Heart left ventricle (tissue), 16 donors: ENCODE measurements at regions of chr1 and their contacts with region 1.

Region 1: GRCh38 chr1:27979151-27979858 is 19.5 kb downstream of the XKR8 start:
- DNase-seq: no peak
- ATAC-seq: peak in 3 of 4 donors; percentile 61 to 79 (median 62)
- H3K4me3 ChIP-seq: no peak overlapping the region
- H3K27ac ChIP-seq: peak overlapping the region in 1 of 12 donors; percentile 53
- H3K4me1 ChIP-seq: peaks cover 0 to 14% (median 2%) of the 10 kb centered on the region in 12 donors
- H3K27me3 ChIP-seq: no peaks in the 10 kb centered on the region
- CTCF ChIP-seq: peak; percentile 26 to 68 (median 50)
- POLR2A ChIP-seq: no peak

Region 2: GRCh38 chr1:27616441-27616840 is 362.9 kb before region 1 on chr1:
- intact Hi-C with region 1: no loop called
- DNase-seq: peak in 1 of 5 donors; percentile 14
- ATAC-seq: no peak
- H3K4me3 ChIP-seq: no peak overlapping the region
- H3K27ac ChIP-seq: no peak overlapping the region
- H3K4me1 ChIP-seq: peaks cover 0 to 55% (median 2%) of the 10 kb centered on the region in 12 donors
- H3K27me3 ChIP-seq: no peaks in the 10 kb centered on the region
- CTCF ChIP-seq: peak in 1 of 12 donors; percentile 11
- POLR2A ChIP-seq: no peak

Region 3: DNA sequence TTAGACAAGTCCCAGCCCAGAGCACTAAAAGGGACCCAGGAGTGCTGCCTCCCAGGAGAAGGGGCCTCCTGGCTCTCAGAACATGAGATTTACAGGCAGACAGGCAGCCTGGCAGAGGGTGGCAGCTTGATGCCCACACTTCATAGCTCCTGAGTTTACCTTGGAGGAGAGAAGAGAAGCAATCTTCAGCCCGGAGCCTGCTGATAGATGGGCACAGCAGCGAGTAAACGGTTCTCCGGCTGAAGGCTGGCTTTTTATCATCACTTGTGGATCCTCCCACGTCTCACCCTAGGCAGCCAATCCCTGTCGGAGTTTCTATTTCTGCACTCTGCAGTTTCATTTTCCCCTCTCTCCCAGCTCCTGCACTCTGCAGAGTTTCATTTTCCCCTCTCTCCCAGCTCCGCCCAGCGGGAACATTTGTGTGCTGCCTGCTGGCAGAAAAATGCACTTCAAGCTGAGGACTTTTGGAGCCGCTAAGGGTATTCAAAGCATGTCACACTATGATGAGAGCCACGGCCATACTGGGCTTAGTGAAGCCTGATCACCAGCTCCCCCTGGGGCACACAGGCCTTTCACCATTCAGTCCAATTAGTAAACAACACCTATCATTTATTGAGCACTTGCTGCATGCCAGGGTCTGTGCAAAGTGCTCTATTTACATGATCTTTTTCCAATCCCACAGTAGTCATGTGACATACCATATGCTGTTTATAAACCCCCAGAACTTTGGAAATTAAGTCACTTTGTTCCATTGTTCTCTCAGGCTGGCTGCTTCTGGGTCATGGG is 307.1 kb before region 1 on chr1 and contains the start of gene IFI6:
- intact Hi-C with region 1: loop called in 1 of 10 experiments (anchors 10 kb)
- DNase-seq: peak; percentile 85 to 91 (median 89)
- ATAC-seq: peak; percentile 95 to 99 (median 98)
- H3K4me3 ChIP-seq: peak within 1 kb of the TSS; percentile 38 to 94 (median 61)
- H3K27ac ChIP-seq: peak within 1 kb of the TSS; percentile 43 to 92 (median 86)
- H3K4me1 ChIP-seq: peaks cover 0 to 55% (median 23%) of the 10 kb centered on the region in 12 donors
- H3K27me3 ChIP-seq: no peaks in the 10 kb centered on the region
- CTCF ChIP-seq: peak in 11 of 12 donors; percentile 5 to 62 (median 42)
- POLR2A ChIP-seq: peak in 1 of 2 donors; percentile 61
- total RNA-seq, gene IFI6: 18.3 to 140 (median 70.2) TPM

Region 4: GRCh38 chr1:27858072-27858958 is 121.0 kb before region 1 on chr1:
- intact Hi-C with region 1: loop called (anchors 1 to 10 kb)
- DNase-seq: peak; percentile 75 to 89 (median 81)
- ATAC-seq: peak; percentile 79 to 94 (median 91)
- H3K4me3 ChIP-seq: peak overlapping the region in 1 of 12 donors; percentile 29
- H3K27ac ChIP-seq: peak overlapping the region in 1 of 12 donors; percentile 75
- H3K4me1 ChIP-seq: peaks cover 0 to 35% (median 3%) of the 10 kb centered on the region in 12 donors
- H3K27me3 ChIP-seq: no peaks in the 10 kb centered on the region
- CTCF ChIP-seq: peak; percentile 77 to 96 (median 88)
- POLR2A ChIP-seq: no peak

Region 5: DNA sequence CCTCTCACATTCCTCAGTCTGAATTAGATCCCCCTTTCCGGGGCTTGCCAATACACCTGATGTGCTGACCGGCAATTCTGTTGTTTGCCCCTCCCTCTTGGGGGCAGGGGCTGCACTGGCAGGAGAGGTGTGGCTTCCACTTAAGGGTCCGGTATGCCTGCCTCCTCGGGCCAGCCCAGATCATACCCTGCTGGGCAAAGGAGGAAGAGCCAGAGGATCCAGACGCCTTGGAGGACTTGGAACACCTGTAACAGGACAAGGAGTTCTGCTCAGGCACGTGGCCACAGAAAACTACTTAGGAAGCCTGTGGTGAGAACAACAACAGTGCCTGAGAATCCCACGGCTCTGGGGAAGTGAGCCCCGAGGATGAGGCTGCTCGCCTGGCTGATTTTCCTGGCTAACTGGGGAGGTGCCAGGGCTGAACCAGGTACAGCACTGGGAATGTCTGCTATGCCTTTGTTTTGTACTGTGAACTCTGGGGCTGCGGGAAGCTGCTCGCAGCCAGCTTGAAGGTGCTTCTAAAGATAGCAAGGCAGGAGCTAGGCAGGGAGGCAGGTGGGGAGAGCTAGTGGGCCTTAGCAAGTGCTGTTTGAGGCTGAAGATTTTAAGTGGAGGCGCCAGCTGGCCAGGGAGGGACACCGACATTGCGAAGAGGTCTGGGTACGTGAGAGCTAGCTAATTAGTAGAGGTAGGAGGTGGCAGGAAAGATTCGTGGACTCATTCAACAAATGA is 44.3 kb before region 1 on chr1 and contains the start of gene SMPDL3B:
- intact Hi-C with region 1: loop called in 4 of 10 experiments (anchors 1 to 10 kb)
- DNase-seq: no peak
- ATAC-seq: peak in 2 of 4 donors; percentile 9 to 64
- H3K4me3 ChIP-seq: peak within 1 kb of the TSS in 2 of 12 donors; percentile 8 to 20
- H3K27ac ChIP-seq: no peak within 1 kb of the TSS
- H3K4me1 ChIP-seq: peaks cover 0 to 12% (median 1%) of the 10 kb centered on the region in 12 donors
- H3K27me3 ChIP-seq: peaks cover 0 to 27% (median 8%) of the 10 kb centered on the region in 9 donors
- CTCF ChIP-seq: no peak
- POLR2A ChIP-seq: no peak
- total RNA-seq, gene SMPDL3B: 2.2 TPM in 1 of 9 donors, not detected in the others

Region 6: DNA sequence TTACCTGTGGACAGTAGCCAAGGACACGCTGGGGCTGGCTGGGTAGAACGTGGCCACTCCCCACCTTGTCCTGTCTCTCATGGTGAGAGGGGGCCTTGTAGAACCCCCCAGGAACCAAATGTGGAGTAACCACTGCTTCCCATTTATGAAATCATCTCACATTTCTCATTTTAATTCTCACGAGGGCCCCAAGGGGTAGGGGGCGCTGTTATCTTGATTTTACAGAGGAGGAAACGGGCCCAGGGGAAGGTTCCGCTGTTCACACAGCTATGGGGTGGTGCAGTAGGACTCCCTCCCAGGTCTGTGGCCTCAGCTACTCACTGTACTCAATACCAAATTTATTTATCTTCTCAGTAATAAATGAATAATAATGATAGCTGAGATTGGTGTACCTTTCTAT is 39.0 kb before region 1 on chr1:
- intact Hi-C with region 1: loop called in 4 of 10 experiments (anchors 1 to 10 kb)
- DNase-seq: peak in 3 of 5 donors; percentile 48 to 63 (median 48)
- ATAC-seq: peak in 3 of 4 donors; percentile 45 to 52 (median 51)
- H3K4me3 ChIP-seq: no peak overlapping the region
- H3K27ac ChIP-seq: no peak overlapping the region
- H3K4me1 ChIP-seq: peaks cover 0 to 22% (median 0%) of the 10 kb centered on the region in 12 donors
- H3K27me3 ChIP-seq: peaks cover 0 to 12% (median under 1%) of the 10 kb centered on the region in 9 donors
- CTCF ChIP-seq: peak in 9 of 12 donors; percentile 18 to 43 (median 31)
- POLR2A ChIP-seq: no peak

Region 7: DNA sequence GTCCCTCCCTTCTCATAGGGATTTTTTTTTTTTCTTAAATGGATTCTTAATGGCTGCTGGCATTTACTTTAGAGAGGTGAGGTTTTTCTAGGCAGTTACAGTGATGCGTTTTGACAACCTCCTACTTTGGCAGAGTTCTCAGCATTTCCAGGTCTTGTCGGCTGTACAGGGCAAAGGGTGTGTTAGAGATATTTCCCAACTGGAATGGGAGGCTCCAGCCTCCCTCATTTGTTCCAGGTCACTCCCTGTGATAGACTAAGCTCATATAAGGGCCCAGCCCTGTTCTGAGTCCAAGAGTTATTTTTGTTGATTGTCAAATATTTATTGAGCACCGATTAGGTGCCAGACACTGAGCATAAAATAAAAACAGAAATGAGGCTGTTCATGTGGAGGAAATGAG is 27.2 kb before region 1 on chr1:
- intact Hi-C with region 1: no loop called
- DNase-seq: no peak
- ATAC-seq: peak in 1 of 4 donors; percentile 66
- H3K4me3 ChIP-seq: no peak overlapping the region
- H3K27ac ChIP-seq: no peak overlapping the region
- H3K4me1 ChIP-seq: no peaks in the 10 kb centered on the region
- H3K27me3 ChIP-seq: no peaks in the 10 kb centered on the region
- CTCF ChIP-seq: no peak
- POLR2A ChIP-seq: no peak

Region 8: GRCh38 chr1:27999055-27999454 is 19.8 kb after region 1 on chr1:
- intact Hi-C with region 1: no loop called
- DNase-seq: no peak
- ATAC-seq: no peak
- H3K4me3 ChIP-seq: no peak overlapping the region
- H3K27ac ChIP-seq: no peak overlapping the region
- H3K4me1 ChIP-seq: peaks cover 0 to 6% (median 2%) of the 10 kb centered on the region in 12 donors
- H3K27me3 ChIP-seq: no peaks in the 10 kb centered on the region
- CTCF ChIP-seq: no peak
- POLR2A ChIP-seq: no peak